ENCODE measurements at regions of chr11 and their contacts with region 1.

Region 1: DNA sequence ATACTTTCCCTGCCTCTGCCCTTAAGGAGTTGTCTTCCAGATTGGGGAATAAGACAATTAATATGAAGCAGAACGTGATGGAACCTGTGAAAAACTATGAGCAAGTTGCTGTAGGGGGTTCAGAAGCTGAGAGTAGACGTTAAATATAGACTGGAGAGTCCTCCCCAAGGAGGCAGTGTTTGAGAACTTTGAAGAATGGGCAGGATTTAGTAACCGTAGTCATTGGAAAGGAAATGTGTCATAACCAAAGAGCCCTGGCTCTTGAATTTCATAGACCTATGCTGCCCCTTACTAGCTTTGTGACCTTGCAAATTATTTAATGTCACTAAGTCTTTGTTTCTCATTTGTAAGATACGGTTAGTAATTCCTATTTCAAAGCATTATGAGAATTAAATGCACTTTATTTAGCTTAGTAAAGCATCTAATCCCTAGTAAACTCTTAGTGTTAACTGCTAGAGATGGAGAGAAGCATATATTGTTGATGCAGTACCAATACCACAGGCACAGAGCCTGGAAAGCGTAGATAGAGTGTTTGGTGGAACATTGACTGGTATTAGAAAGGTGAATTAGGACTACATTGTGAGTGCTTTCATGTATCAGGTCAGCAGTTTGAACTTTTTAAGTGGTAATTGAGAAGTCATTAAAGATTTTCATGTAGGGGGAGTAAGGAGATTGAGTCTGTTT is 54.1 kb downstream of the MCAM start:
- DNase-seq: peak in 4 of 14 experiments; percentile 14 to 61 (median 54)
- ATAC-seq: peak; percentile 34
- H3K4me3 ChIP-seq: no peak overlapping the region
- H3K4me3 Mint-ChIP-seq: no peak overlapping the region
- H3K27ac ChIP-seq: peak overlapping the region; percentile 44 to 63
- H3K27ac Mint-ChIP-seq: no peak overlapping the region
- H3K4me1 ChIP-seq: peaks cover 53% of the 10 kb centered on the region
- H3K4me1 Mint-ChIP-seq: peaks cover 50% of the 10 kb centered on the region
- H3K27me3 ChIP-seq: no peaks in the 10 kb centered on the region
- H3K27me3 Mint-ChIP-seq: no peaks in the 10 kb centered on the region
- CTCF ChIP-seq: no peak

Region 2: GRCh38 chr11:118715245-118715831 is 547.5 kb before region 1 on chr11:
- CTCF ChIA-PET with region 1: no interaction called
- POLR2A ChIA-PET with region 1: no interaction called
- intact Hi-C with region 1: no loop called
- DNase-seq: no peak
- ATAC-seq: no peak
- H3K4me3 ChIP-seq: no peak overlapping the region
- H3K4me3 Mint-ChIP-seq: no peak overlapping the region
- H3K27ac ChIP-seq: no peak overlapping the region
- H3K27ac Mint-ChIP-seq: no peak overlapping the region
- H3K4me1 ChIP-seq: no peaks in the 10 kb centered on the region
- H3K4me1 Mint-ChIP-seq: no peaks in the 10 kb centered on the region
- H3K27me3 ChIP-seq: no peaks in the 10 kb centered on the region
- H3K27me3 Mint-ChIP-seq: no peaks in the 10 kb centered on the region
- CTCF ChIP-seq: no peak

Region 3: DNA sequence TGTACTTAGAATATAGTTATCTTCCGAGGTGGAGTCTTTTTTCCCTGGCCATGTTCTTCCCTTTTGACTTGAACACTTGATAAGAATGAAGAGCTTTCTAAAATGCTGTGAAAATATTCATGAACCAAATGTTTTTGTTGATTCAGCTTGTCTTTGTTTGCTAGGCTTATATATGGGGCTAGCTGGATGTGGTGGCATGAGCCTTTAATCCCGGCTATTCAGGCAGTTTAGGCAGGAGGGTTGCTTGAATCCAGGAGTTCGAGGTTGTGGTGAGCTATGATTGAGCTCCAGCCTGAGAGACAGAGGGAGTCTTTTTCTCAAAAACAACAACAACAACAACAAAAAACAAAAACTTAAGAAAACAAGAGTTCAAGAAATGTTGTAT is 33.5 kb before region 1 on chr11:
- CTCF ChIA-PET with region 1: interaction called, 4 read pairs
- POLR2A ChIA-PET with region 1: interaction called, 8 read pairs
- intact Hi-C with region 1: loop called in 1 of 2 experiments (anchors 5 kb)
- DNase-seq: no peak
- ATAC-seq: no peak
- H3K4me3 ChIP-seq: no peak overlapping the region
- H3K4me3 Mint-ChIP-seq: peak overlapping the region; percentile 49
- H3K27ac ChIP-seq: no peak overlapping the region
- H3K27ac Mint-ChIP-seq: peak overlapping the region; percentile 81
- H3K4me1 ChIP-seq: peaks cover 28% of the 10 kb centered on the region
- H3K4me1 Mint-ChIP-seq: peaks cover 67% of the 10 kb centered on the region
- H3K27me3 ChIP-seq: no peaks in the 10 kb centered on the region
- H3K27me3 Mint-ChIP-seq: no peaks in the 10 kb centered on the region
- CTCF ChIP-seq: no peak

Region 4: GRCh38 chr11:119236490-119236889 is 26.3 kb before region 1 on chr11:
- CTCF ChIA-PET with region 1: no interaction called
- POLR2A ChIA-PET with region 1: interaction called, 10 read pairs
- intact Hi-C with region 1: loop called in 1 of 2 experiments (anchors 2 kb)
- DNase-seq: no peak
- ATAC-seq: no peak
- H3K4me3 ChIP-seq: no peak overlapping the region
- H3K4me3 Mint-ChIP-seq: no peak overlapping the region
- H3K27ac ChIP-seq: no peak overlapping the region
- H3K27ac Mint-ChIP-seq: peak overlapping the region; percentile 10
- H3K4me1 ChIP-seq: peaks cover 16% of the 10 kb centered on the region
- H3K4me1 Mint-ChIP-seq: peaks cover 64% of the 10 kb centered on the region
- H3K27me3 ChIP-seq: no peaks in the 10 kb centered on the region
- H3K27me3 Mint-ChIP-seq: no peaks in the 10 kb centered on the region
- CTCF ChIP-seq: no peak

Region 5: DNA sequence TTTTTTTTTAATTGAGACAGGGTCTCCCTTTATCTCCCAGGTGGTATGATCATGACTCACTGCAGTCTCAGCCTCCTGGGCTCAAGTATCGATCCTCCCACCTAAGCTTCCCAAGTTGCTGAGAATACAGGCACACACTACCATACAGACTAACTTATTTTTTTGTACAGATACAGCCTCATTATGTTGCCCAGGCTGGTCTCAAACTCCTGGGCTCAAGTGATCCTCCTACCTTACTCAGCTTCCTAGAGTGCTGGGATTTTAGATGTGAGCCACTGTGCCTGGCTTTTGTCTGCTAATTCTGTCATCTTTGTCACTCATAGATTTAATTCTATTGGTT is 13.2 kb before region 1 on chr11:
- CTCF ChIA-PET with region 1: interaction called, 4 read pairs
- POLR2A ChIA-PET with region 1: interaction called, 10 read pairs
- intact Hi-C with region 1: no loop called
- DNase-seq: no peak
- ATAC-seq: no peak
- H3K4me3 ChIP-seq: no peak overlapping the region
- H3K4me3 Mint-ChIP-seq: no peak overlapping the region
- H3K27ac ChIP-seq: no peak overlapping the region
- H3K27ac Mint-ChIP-seq: peak overlapping the region; percentile 72
- H3K4me1 ChIP-seq: peaks cover 5% of the 10 kb centered on the region
- H3K4me1 Mint-ChIP-seq: peaks cover 51% of the 10 kb centered on the region
- H3K27me3 ChIP-seq: no peaks in the 10 kb centered on the region
- H3K27me3 Mint-ChIP-seq: no peaks in the 10 kb centered on the region
- CTCF ChIP-seq: no peak

Region 6: GRCh38 chr11:119284344-119285157 is 21.7 kb after region 1 on chr11:
- CTCF ChIA-PET with region 1: interaction called, 27 read pairs
- POLR2A ChIA-PET with region 1: interaction called, 10 read pairs
- intact Hi-C with region 1: no loop called
- DNase-seq: peak in 4 of 14 experiments; percentile 32 to 77 (median 74)
- ATAC-seq: peak; percentile 97
- H3K4me3 ChIP-seq: no peak overlapping the region
- H3K4me3 Mint-ChIP-seq: no peak overlapping the region
- H3K27ac ChIP-seq: no peak overlapping the region
- H3K27ac Mint-ChIP-seq: peak overlapping the region; percentile 34
- H3K4me1 ChIP-seq: peaks cover 11% of the 10 kb centered on the region
- H3K4me1 Mint-ChIP-seq: peaks cover 40% of the 10 kb centered on the region
- H3K27me3 ChIP-seq: no peaks in the 10 kb centered on the region
- H3K27me3 Mint-ChIP-seq: no peaks in the 10 kb centered on the region
- CTCF ChIP-seq: peak; percentile 80

Region 7: GRCh38 chr11:119361056-119361787 is 98.4 kb after region 1 on chr11:
- CTCF ChIA-PET with region 1: no interaction called
- POLR2A ChIA-PET with region 1: no interaction called
- intact Hi-C with region 1: no loop called
- DNase-seq: no peak
- ATAC-seq: no peak
- H3K4me3 ChIP-seq: no peak overlapping the region
- H3K4me3 Mint-ChIP-seq: no peak overlapping the region
- H3K27ac ChIP-seq: no peak overlapping the region
- H3K27ac Mint-ChIP-seq: no peak overlapping the region
- H3K4me1 ChIP-seq: peaks cover 26% of the 10 kb centered on the region
- H3K4me1 Mint-ChIP-seq: peaks cover 19% of the 10 kb centered on the region
- H3K27me3 ChIP-seq: peaks cover 22 to 40% of the 10 kb centered on the region in 2 experiments
- H3K27me3 Mint-ChIP-seq: peaks cover 50% of the 10 kb centered on the region
- CTCF ChIP-seq: no peak

Region 8: GRCh38 chr11:119445850-119446249 is 183.0 kb after region 1 on chr11:
- CTCF ChIA-PET with region 1: no interaction called
- POLR2A ChIA-PET with region 1: no interaction called
- intact Hi-C with region 1: no loop called
- DNase-seq: no peak
- ATAC-seq: no peak
- H3K4me3 ChIP-seq: no peak overlapping the region
- H3K4me3 Mint-ChIP-seq: no peak overlapping the region
- H3K27ac ChIP-seq: no peak overlapping the region
- H3K27ac Mint-ChIP-seq: no peak overlapping the region
- H3K4me1 ChIP-seq: no peaks in the 10 kb centered on the region
- H3K4me1 Mint-ChIP-seq: no peaks in the 10 kb centered on the region
- H3K27me3 ChIP-seq: peaks cover 0 to 3% of the 10 kb centered on the region in 2 experiments
- H3K27me3 Mint-ChIP-seq: peaks cover 31% of the 10 kb centered on the region
- CTCF ChIP-seq: no peak